AG04449 (cell line): ENCODE measurements at regions of chr3 and their contacts with region 1.

Region 1: GRCh38 chr3:46909535-46910442 is 32.3 kb downstream of the PTH1R start:
- DNase-seq: peak; percentile 38
- H3K4me3 ChIP-seq: no peak overlapping the region
- CTCF ChIP-seq: peak; percentile 88

Region 2: GRCh38 chr3:46845791-46846623 is 63.8 kb before region 1 on chr3:
- CTCF ChIA-PET with region 1: interaction called, 27 read pairs
- POLR2A ChIA-PET with region 1: no interaction called
- DNase-seq: no peak
- H3K4me3 ChIP-seq: peak overlapping the region; percentile 45
- CTCF ChIP-seq: peak; percentile 67

Region 3: GRCh38 chr3:46874430-46874829 is 35.4 kb before region 1 on chr3:
- CTCF ChIA-PET with region 1: interaction called, 15 read pairs
- POLR2A ChIA-PET with region 1: no interaction called
- DNase-seq: no peak
- H3K4me3 ChIP-seq: no peak overlapping the region
- CTCF ChIP-seq: no peak

Region 4: DNA sequence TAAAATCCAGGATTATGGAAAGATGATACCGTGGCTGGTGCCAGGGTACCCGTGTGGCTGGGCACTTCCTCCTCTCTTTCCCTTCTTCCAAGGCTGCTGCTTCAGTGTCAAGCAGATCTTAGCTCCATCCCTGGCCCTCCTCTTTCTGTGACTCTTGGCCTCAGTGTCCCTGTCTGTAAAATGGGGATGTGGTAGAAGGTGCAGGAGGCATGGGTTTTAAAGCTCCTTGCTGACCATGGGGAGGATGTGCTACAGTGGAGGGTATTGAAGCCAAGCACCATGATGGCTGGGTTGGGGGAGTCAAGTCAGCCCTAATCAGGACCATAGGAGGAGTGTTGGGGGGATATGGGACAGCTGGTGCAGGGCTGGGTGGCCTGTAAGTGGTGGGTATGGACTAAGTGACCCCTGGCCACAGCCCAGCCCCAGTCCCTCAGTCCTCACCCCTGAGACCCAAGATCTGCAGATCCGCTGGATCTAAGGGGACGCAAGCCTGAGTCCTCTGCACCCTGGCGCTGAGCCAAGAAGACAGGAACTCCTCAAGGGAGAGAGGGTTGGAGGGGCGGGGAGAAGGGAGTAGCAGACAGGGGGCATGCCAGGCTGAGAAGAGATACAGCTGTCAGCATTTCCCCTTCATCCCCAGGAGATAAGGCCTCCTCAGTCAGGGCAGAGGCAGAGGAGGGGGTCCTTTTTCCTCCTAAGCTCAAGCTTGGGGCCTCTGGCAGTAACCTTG is 20.2 kb before region 1 on chr3:
- CTCF ChIA-PET with region 1: interaction called, 19 read pairs
- POLR2A ChIA-PET with region 1: no interaction called
- DNase-seq: no peak
- H3K4me3 ChIP-seq: no peak overlapping the region
- CTCF ChIP-seq: no peak

Region 5: GRCh38 chr3:46923559-46924350 is 14.0 kb after region 1 on chr3:
- CTCF ChIA-PET with region 1: interaction called, 48 read pairs
- POLR2A ChIA-PET with region 1: no interaction called
- DNase-seq: no peak
- H3K4me3 ChIP-seq: no peak overlapping the region
- CTCF ChIP-seq: peak; percentile 61

Region 6: DNA sequence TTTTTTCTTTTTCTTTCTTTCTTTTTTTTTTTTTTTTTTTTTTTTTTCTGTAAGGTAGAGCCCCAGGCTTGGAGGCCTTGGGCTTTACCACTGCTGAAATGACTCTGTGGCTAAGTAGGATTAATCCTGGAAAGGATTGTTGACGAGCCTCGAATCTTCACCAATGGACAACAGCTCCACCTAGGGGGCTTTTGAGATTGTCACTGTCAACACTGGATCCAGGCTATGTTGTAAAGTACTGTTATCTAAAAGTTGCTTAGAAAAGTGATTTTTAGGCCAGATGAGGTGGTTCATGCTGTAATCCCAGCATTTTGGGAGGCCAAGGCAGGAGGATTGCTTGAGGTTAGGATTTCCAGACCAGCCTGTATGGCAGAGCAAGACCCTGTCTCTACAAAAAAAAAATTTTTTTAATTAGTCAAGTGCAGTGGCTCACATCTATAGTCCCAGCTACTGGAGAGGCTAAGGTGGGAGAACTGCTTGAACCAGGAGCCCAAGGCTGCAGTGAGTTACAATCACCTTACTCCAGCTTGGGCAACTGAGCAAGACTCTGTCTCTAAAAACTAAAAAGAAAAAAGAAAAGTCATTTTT is 414.6 kb after region 1 on chr3:
- CTCF ChIA-PET with region 1: interaction called, 10 read pairs
- POLR2A ChIA-PET with region 1: no interaction called
- DNase-seq: no peak
- H3K4me3 ChIP-seq: no peak overlapping the region
- CTCF ChIP-seq: peak; percentile 74